PC-3 (cell line): ENCODE measurements at regions of chr12 and their contacts with region 1.

Region 1: GRCh38 chr12:57078519-57079404 is at the start of gene NEMP1:
- DNase-seq: peak; percentile 100
- ATAC-seq: peak; percentile 99
- H3K4me3 ChIP-seq: peak within 1 kb of the TSS; percentile 90
- H3K27ac ChIP-seq: peak within 1 kb of the TSS; percentile 51
- H3K4me1 ChIP-seq: peaks cover 6% of the 10 kb centered on the region; the same call in 1 of the 2 replicates
- H3K27me3 ChIP-seq: no peaks in the 10 kb centered on the region
- CTCF ChIP-seq: no peak
- total RNA-seq, gene NEMP1: 16.4 and 18.3 TPM in 2 replicates

Region 2: DNA sequence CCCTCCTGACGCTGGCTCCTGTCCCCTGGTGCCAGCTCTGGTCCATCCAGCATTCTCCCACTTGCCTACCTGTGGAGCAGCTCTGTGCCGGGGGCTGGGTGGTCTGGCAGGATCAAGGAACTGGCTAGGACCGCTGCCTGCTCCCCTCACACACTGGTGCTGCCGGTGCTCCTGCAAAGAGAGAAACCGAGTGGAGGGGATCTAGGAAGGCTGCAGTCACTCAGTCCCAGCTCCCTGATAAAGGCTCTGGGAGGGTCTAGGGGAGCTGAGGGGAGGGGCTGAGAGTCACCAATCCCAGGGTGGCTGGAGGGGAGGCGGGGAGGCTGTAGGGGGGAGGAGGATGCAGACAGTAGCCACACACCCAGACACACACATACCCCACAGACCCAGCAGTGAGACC is 62.4 kb before region 1 on chr12 and contains the start of gene TAC3:
- CTCF ChIA-PET with region 1: no interaction called
- POLR2A ChIA-PET with region 1: interaction called, 16 read pairs
- intact Hi-C with region 1: no loop called
- DNase-seq: no peak
- ATAC-seq: no peak
- H3K4me3 ChIP-seq: no peak within 1 kb of the TSS
- H3K27ac ChIP-seq: no peak within 1 kb of the TSS
- H3K4me1 ChIP-seq: peaks cover 7% of the 10 kb centered on the region
- H3K27me3 ChIP-seq: peaks cover 35% of the 10 kb centered on the region
- CTCF ChIP-seq: no peak
- total RNA-seq, gene TAC3: not detected in 2 replicates

Region 3: GRCh38 chr12:57111031-57111734 is 32.4 kb after region 1 on chr12 and contains the start of gene STAT6:
- CTCF ChIA-PET with region 1: interaction called, 14 read pairs
- POLR2A ChIA-PET with region 1: interaction called, 7 read pairs
- intact Hi-C with region 1: no loop called
- DNase-seq: peak; percentile 59
- ATAC-seq: peak; percentile 53
- H3K4me3 ChIP-seq: peak within 1 kb of the TSS; percentile 69
- H3K27ac ChIP-seq: peak within 1 kb of the TSS; percentile 82
- H3K4me1 ChIP-seq: peaks cover 32% of the 10 kb centered on the region
- H3K27me3 ChIP-seq: no peaks in the 10 kb centered on the region
- CTCF ChIP-seq: no peak
- total RNA-seq, gene STAT6: 20.8 and 28.4 TPM in 2 replicates

Region 4: DNA sequence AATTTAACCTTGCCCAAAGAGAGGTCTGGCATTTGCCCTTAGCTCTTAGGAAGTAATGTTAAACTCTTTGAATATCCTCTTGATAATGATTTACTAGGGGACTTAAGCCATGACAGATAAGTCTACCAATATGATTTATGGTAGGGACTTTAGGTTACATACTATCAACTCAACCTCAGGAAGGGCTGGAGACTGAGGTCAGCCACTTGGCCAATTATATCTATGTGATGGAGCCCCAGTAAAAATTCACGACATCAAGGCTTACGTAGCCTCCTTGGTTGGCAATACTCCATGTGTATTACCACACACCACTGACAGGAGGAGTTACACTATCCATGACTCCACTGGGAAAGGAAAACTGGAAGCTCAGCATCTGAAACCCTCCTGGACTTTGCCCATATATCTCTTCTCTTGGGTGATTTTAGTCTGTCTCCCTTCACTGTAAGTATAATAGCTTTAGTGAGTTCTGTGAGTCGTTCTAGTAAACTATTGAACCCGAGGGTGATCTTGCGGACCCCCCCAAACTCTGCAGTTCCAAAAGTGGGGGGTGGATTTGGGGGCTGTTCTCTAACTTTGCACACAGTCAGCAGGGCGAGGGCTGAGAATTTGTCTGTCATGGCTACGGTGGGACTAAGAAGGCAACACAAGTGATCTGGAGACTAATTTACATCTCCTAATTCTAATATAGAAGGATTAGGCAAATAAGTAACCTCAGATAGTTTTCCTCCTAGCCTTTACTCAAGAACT is 289.8 kb after region 1 on chr12:
- CTCF ChIA-PET with region 1: no interaction called
- POLR2A ChIA-PET with region 1: no interaction called
- intact Hi-C with region 1: no loop called
- DNase-seq: no peak
- ATAC-seq: no peak
- H3K4me3 ChIP-seq: no peak overlapping the region
- H3K27ac ChIP-seq: no peak overlapping the region
- H3K4me1 ChIP-seq: no peaks in the 10 kb centered on the region
- H3K27me3 ChIP-seq: no peaks in the 10 kb centered on the region
- CTCF ChIP-seq: no peak